Left lung (tissue), 14 donors: ENCODE measurements at regions of chr17 and their contacts with region 1.

Region 1: GRCh38 chr17:81394921-81395599 is at the start of gene BAHCC1:
- DNase-seq: peak; percentile 99 to 100 (median 100)
- ATAC-seq: peak; percentile 79
- H3K4me3 ChIP-seq: peak within 1 kb of the TSS; percentile 45 to 72
- H3K27ac ChIP-seq: peak within 1 kb of the TSS; percentile 93
- H3K4me1 ChIP-seq: peaks cover 21 to 79% of the 10 kb centered on the region in 2 donors
- H3K27me3 ChIP-seq: peaks cover 0 to 91% of the 10 kb centered on the region in 2 donors
- CTCF ChIP-seq: no peak
- polyA plus RNA-seq, gene BAHCC1: 15.8 to 28.5 (median 23.6) TPM

Region 2: DNA sequence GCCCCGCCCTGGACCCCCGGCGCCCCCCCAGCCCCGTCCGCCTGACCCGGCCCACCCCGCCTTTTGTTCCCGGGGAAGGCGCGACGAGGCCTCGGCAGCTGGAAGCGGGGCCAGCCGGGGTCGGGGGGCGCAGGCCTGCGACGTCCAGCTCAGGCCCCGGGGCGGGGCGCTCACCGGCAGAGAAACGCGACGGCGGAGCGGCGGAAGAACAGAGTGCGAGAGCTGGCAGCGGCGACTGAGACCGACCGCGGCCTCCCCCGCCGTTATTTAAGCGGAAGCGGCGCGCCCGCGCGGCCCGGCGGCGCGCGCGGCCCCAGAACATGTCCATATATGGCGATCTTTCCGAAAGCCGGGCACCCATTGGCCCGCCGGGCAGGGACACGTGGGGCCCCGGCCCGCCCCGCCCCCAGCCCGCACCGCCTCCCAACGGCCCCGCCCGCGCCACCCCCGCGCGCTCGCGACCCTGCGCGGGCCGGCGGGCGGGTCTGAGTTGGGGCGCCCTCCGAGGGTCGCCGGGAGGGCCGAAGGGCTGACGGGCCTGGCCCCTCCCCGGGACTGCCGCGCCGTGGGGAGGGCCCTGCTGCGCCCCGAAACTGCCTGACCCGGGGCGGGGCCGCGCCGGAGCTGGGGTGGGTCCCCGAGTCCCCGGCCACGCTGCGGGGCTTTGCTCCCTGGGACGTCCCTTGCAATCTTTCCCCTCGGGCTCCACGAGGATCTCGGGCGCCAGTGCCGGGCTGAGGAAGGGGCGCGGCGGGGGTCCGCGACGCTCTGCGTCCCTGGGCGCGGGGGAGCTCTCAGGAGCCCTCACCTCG is 117.7 kb after region 1 on chr17 and contains the start of gene ACTG1:
- intact Hi-C with region 1: loop called in 1 of 2 experiments (anchors 5 kb)
- DNase-seq: peak; percentile 93 to 96 (median 95)
- ATAC-seq: peak; percentile 65
- H3K4me3 ChIP-seq: peak within 1 kb of the TSS; percentile 86 to 91
- H3K27ac ChIP-seq: peak within 1 kb of the TSS; percentile 99 to 100
- H3K4me1 ChIP-seq: peaks cover 19 to 51% of the 10 kb centered on the region in 2 donors
- H3K27me3 ChIP-seq: no peaks in the 10 kb centered on the region
- CTCF ChIP-seq: no peak
- polyA plus RNA-seq, gene ACTG1: 2,385 to 3,414 (median 2,872) TPM